Endothelial cell of umbilical vein (primary cell): ENCODE measurements at regions of chr15 and their contacts with region 1.

Region 1: DNA sequence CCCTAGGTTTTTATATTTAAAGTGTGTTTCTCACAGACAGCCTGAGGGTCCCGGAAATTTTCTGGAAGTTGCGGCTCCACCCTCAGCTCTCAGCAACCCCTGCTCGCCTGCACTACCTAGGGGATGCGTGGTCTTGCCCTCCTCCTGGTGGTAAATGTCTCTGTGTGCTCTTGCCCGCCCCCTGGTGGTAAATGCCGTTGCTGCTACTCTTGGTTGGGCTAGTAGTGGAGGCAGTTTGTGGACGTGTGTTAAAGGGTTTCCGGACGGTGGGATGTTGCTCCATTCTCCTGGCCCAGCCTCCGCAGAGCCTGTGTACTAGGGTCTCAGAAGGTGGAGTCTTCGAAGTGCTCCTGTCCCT is 27.4 kb downstream of the STOML1 start:
- DNase-seq: peak; percentile 83
- H3K4me3 ChIP-seq: no peak overlapping the region
- H3K27ac ChIP-seq: no peak overlapping the region
- H3K4me1 ChIP-seq: peaks cover 20% of the 10 kb centered on the region
- H3K27me3 ChIP-seq: no peaks in the 10 kb centered on the region
- CTCF ChIP-seq: peak; percentile 95 to 98
- POLR2A ChIP-seq: no peak

Region 2: GRCh38 chr15:73800662-73801345 is 163.9 kb before region 1 on chr15:
- CTCF ChIA-PET with region 1: no interaction called
- POLR2A ChIA-PET with region 1: no interaction called
- dilution Hi-C with region 1: no loop called
- intact Hi-C with region 1: no loop called
- DNase-seq: peak; percentile 36
- H3K4me3 ChIP-seq: no peak overlapping the region
- H3K27ac ChIP-seq: no peak overlapping the region
- H3K4me1 ChIP-seq: no peaks in the 10 kb centered on the region
- H3K27me3 ChIP-seq: peaks cover 0 to 3% of the 10 kb centered on the region in 2 experiments
- CTCF ChIP-seq: no peak
- POLR2A ChIP-seq: no peak

Region 3: GRCh38 chr15:73851689-73852088 is 113.0 kb before region 1 on chr15:
- CTCF ChIA-PET with region 1: no interaction called
- POLR2A ChIA-PET with region 1: no interaction called
- dilution Hi-C with region 1: no loop called
- intact Hi-C with region 1: no loop called
- DNase-seq: peak; percentile 34
- H3K4me3 ChIP-seq: no peak overlapping the region
- H3K27ac ChIP-seq: no peak overlapping the region
- H3K4me1 ChIP-seq: no peaks in the 10 kb centered on the region
- H3K27me3 ChIP-seq: peaks cover 1 to 2% of the 10 kb centered on the region in 2 experiments
- CTCF ChIP-seq: no peak
- POLR2A ChIP-seq: no peak

Region 4: GRCh38 chr15:73862276-73862675 is 102.4 kb before region 1 on chr15:
- CTCF ChIA-PET with region 1: no interaction called
- POLR2A ChIA-PET with region 1: no interaction called
- dilution Hi-C with region 1: no loop called
- intact Hi-C with region 1: no loop called
- DNase-seq: no peak
- H3K4me3 ChIP-seq: no peak overlapping the region
- H3K27ac ChIP-seq: no peak overlapping the region
- H3K4me1 ChIP-seq: no peaks in the 10 kb centered on the region
- H3K27me3 ChIP-seq: peaks cover 7 to 33% of the 10 kb centered on the region in 2 experiments
- CTCF ChIP-seq: no peak
- POLR2A ChIP-seq: no peak

Region 5: DNA sequence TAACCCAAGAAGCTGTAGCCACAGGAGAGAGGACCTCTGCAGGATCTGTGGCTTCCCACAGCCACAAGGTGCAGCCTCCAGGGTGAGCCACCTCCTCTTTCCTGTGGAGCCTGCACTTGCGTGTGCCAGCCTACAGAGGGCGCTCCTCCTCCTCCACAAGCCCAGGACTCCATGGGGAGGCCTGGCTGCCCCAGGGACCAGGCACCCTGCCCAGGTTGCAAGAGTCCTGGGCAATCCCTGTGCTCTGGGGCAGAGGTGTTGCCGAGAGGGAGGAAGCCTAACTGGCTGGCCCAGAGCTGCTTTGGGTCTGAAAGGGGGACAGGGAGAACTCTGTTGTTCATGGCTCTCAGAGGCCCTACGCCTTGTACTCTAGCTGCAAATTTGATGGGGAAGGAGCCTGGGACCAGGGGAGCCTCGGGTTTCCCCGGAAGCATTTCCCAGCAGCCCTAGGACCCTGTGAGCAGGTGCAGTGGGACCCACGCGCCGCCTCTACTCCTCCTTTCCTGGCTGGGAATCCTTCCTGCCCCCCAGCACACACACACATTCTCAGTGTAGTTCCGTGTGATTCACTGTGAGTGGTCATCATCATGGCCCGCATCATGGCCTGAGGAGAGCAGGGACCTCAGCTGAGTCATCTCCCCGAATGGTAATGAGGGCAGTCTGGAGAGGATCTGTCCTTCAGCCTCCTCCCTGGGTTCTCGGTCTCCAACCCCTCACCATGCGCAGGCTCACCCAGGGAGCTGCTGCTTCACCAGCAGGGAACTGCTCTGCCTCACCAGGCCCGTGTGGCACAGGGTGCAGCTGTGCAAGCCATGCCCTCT is 67.1 kb before region 1 on chr15:
- CTCF ChIA-PET with region 1: interaction called, 3 read pairs
- POLR2A ChIA-PET with region 1: no interaction called
- dilution Hi-C with region 1: no loop called
- intact Hi-C with region 1: loop called (anchors 1 kb)
- DNase-seq: peak; percentile 65
- H3K4me3 ChIP-seq: no peak overlapping the region
- H3K27ac ChIP-seq: no peak overlapping the region
- H3K4me1 ChIP-seq: no peaks in the 10 kb centered on the region
- H3K27me3 ChIP-seq: peaks cover 0 to 1% of the 10 kb centered on the region in 2 experiments
- CTCF ChIP-seq: peak; percentile 90 to 96
- POLR2A ChIP-seq: no peak

Region 6: GRCh38 chr15:73927476-73928240 is 37.1 kb before region 1 on chr15:
- CTCF ChIA-PET with region 1: interaction called, 17 read pairs
- POLR2A ChIA-PET with region 1: no interaction called
- dilution Hi-C with region 1: no loop called
- intact Hi-C with region 1: no loop called
- DNase-seq: peak; percentile 45
- H3K4me3 ChIP-seq: peak overlapping the region in 1 of 3 experiments; percentile 45
- H3K27ac ChIP-seq: no peak overlapping the region
- H3K4me1 ChIP-seq: peaks cover 24% of the 10 kb centered on the region
- H3K27me3 ChIP-seq: no peaks in the 10 kb centered on the region
- CTCF ChIP-seq: peak; percentile 28 to 51
- POLR2A ChIP-seq: no peak

Region 7: GRCh38 chr15:73936181-73936580 is 28.5 kb before region 1 on chr15:
- CTCF ChIA-PET with region 1: interaction called, 17 read pairs
- POLR2A ChIA-PET with region 1: no interaction called
- dilution Hi-C with region 1: no loop called
- intact Hi-C with region 1: no loop called
- DNase-seq: no peak
- H3K4me3 ChIP-seq: no peak overlapping the region
- H3K27ac ChIP-seq: no peak overlapping the region
- H3K4me1 ChIP-seq: peaks cover 24% of the 10 kb centered on the region
- H3K27me3 ChIP-seq: no peaks in the 10 kb centered on the region
- CTCF ChIP-seq: peak in 1 of 2 donors; percentile 20
- POLR2A ChIP-seq: no peak